ENCODE measurements at regions of chr9 and their contacts with region 1.

Region 1: DNA sequence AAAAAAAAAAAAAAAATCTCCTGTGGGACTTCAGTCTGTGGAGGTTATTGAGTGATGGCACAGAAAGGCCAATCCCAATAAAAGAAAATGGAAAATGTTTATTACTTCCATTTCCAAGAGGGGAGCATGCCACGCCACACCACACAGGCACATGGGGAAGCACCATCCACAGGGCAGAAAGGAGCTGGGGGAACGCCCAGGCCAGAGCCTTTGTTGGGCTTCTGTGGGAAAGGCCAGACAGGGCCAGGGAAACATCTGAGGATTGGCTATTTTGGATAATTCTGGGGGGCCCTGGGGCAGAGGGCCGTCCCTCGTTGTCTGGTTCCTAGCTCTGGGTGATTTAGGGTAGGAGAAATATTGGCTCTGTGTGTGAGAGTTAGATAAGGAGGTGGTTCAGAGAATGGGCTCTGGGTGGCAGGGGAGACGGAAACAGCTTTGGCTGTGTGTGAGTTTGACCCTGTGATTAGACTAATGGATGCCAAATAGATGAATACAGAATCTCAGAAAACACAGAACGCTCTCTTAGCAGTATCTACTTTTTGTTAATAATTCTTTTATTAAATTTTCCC is 49.0 kb upstream of the ABL1 start:
- DNase-seq: no peak
- H3K4me3 ChIP-seq: no peak overlapping the region
- H3K27ac ChIP-seq: no peak overlapping the region
- H3K27me3 ChIP-seq: no peaks in the 10 kb centered on the region
- CTCF ChIP-seq: no peak

Region 2: GRCh38 chr9:130343445-130343918 is 442.5 kb before region 1 on chr9:
- intact Hi-C with region 1: no loop called
- DNase-seq: peak in 3 of 10 donors; percentile 13 to 27 (median 21)
- H3K4me3 ChIP-seq: no peak overlapping the region
- H3K27ac ChIP-seq: no peak overlapping the region
- H3K27me3 ChIP-seq: peaks cover 0 to 6% (median 0%) of the 10 kb centered on the region in 45 donors
- CTCF ChIP-seq: peak in 55 of 56 donors; percentile 34 to 75 (median 63)

Region 3: DNA sequence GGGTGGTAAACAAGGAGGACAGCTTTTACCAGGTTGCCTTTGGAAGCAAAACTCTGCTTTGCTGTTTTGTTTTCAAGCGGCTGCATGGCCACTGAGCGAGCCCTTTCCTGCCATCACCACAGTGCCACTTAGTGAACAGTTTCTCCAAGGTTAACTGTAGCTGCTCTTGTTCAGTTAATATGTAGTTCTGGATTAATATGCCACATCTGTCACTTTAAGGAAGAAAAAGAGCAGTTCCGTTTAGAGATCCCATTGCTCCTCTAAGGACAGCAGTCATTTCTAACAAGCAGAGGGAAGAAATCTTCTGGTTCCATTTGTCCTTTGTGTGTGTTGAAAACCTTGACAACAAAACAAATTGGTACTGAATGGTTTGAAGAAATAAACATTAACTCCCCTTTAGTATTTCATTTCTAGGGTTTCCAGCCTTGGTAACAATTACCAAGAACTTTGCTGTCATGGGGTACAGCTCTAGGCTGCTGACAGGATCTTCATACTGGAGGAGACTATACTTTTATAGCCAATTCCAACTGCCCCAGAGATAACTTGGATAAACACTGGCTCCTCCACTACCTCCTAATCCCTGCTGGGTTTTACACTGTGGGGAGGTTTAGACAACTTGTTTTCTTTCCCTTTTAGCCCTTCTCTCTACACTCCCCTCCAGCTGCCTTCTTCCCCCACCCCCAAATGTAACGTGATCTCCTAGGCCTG is 38.8 kb after region 1 on chr9:
- intact Hi-C with region 1: loop called in 1 of 2 experiments (anchors 5 kb)
- DNase-seq: no peak
- H3K4me3 ChIP-seq: peak overlapping the region in 11 of 59 donors; percentile 2 to 31 (median 11)
- H3K27ac ChIP-seq: peak overlapping the region in 58 of 59 donors; percentile 1 to 85 (median 65)
- H3K27me3 ChIP-seq: no peaks in the 10 kb centered on the region
- CTCF ChIP-seq: peak in 1 of 56 donors; percentile 14

Measured in dorsolateral prefrontal cortex (tissue), 120 donors.